ENCODE measurements at regions of chr17 and their contacts with region 1.

Region 1: DNA sequence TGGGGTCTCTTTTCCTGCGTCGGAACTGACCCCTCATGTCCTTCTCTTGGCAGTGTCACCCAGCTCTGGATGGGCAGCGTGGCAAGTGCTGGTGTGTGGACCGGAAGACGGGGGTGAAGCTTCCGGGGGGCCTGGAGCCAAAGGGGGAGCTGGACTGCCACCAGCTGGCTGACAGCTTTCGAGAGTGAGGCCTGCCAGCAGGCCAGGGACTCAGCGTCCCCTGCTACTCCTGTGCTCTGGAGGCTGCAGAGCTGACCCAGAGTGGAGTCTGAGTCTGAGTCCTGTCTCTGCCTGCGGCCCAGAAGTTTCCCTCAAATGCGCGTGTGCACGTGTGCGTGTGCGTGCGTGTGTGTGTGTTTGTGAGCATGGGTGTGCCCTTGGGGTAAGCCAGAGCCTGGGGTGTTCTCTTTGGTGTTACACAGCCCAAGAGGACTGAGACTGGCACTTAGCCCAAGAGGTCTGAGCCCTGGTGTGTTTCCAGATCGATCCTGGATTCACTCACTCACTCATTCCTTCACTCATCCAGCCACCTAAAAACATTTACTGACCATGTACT is 13.2 kb downstream of the IGFBP4 start:
- DNase-seq: no peak
- ATAC-seq: no peak
- H3K4me3 ChIP-seq: no peak overlapping the region
- H3K27ac ChIP-seq: no peak overlapping the region
- H3K4me1 ChIP-seq: no peaks in the 10 kb centered on the region
- H3K27me3 ChIP-seq: no peaks in the 10 kb centered on the region
- CTCF ChIP-seq: no peak
- EP300 ChIP-seq: no peak
- POLR2A ChIP-seq: no peak
- RAD21 ChIP-seq: no peak

Region 2: DNA sequence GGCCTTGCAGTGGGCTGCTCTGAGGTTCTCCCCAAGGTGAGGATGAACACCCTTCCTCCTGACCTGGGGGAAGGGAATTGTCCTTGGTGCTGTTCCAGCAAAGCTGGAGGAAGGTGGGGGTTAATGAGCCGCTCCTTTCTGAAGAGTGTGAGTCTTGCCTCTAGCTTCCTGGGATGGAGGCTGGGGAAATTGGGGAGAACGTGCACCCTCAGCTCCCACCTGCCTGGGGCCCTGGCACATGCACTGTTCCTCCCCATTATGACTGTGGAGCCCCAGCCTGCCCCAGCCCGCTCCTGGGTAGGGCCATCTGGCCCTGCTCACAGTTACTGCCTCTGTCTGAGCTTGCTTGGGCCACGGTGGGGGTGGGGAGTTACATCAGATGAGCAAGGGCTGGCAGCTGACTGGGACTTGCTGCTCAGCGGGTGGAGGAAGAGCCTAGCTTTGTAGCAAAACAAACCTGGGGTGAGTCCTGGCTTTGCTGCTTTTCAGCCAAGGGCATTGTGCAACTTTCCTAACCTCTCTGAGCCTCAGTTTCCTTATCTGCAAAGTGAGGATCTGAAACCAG is 33.9 kb after region 1 on chr17:
- CTCF ChIA-PET with region 1: no interaction called
- POLR2A ChIA-PET with region 1: interaction called, 10 read pairs
- RAD21 ChIA-PET with region 1: no interaction called
- SMC1A ChIA-PET with region 1: interaction called, 3 read pairs
- in situ Hi-C with region 1: no loop called
- intact Hi-C with region 1: no loop called
- DNase-seq: no peak
- ATAC-seq: peak; percentile 57
- H3K4me3 ChIP-seq: no peak overlapping the region
- H3K27ac ChIP-seq: no peak overlapping the region
- H3K4me1 ChIP-seq: peaks cover 7% of the 10 kb centered on the region
- H3K27me3 ChIP-seq: peaks cover 0 to 2% of the 10 kb centered on the region in 2 experiments; a peak in 2 of 4 replicates
- CTCF ChIP-seq: no peak
- EP300 ChIP-seq: no peak
- POLR2A ChIP-seq: no peak
- RAD21 ChIP-seq: no peak